Thyroid gland (tissue), 4 donors: ENCODE measurements at regions of chr14 and their contacts with region 1.

Region 1: GRCh38 chr14:30980980-30981379 is 44.5 kb upstream of the AP4S1 start:
- DNase-seq: no peak
- H3K4me3 ChIP-seq: no peak overlapping the region
- H3K27ac ChIP-seq: no peak overlapping the region
- H3K4me1 ChIP-seq: peaks cover 0 to 4% of the 10 kb centered on the region in 2 donors
- H3K27me3 ChIP-seq: no peaks in the 10 kb centered on the region
- CTCF ChIP-seq: no peak
- POLR2A ChIP-seq: no peak

Region 2: DNA sequence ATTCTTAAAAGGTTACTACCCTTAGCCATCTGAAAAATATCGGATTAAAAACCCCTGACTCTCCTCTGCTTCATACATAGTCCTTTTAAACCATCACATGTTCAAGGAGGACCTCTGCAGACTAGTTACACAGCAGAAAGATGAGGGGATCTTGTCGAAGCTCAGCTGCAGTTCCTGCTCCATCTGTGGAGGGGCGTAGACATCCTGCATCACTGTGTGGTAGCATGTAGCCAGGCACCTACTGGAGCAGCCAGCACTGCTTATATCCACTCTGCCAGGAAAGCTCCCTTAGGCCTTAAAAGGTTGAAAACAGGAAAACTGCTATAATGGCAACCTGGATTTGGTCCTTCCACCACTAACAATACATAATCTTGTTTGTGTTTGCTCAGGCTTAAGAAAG is 102.8 kb after region 1 on chr14:
- intact Hi-C with region 1: loop called (anchors 2 kb)
- DNase-seq: no peak
- H3K4me3 ChIP-seq: no peak overlapping the region
- H3K27ac ChIP-seq: peak overlapping the region; percentile 48 to 84 (median 57)
- H3K4me1 ChIP-seq: peaks cover 11 to 13% of the 10 kb centered on the region in 2 donors
- H3K27me3 ChIP-seq: no peaks in the 10 kb centered on the region
- CTCF ChIP-seq: no peak
- POLR2A ChIP-seq: no peak